ENCODE measurements at regions of chr20 and their contacts with region 1.

Region 1: GRCh38 chr20:20593447-20594170 is 118.8 kb downstream of the RALGAPA2 start:
- DNase-seq: peak; percentile 36
- H3K4me3 ChIP-seq: no peak overlapping the region
- H3K27ac ChIP-seq: no peak overlapping the region
- H3K27me3 ChIP-seq: no peaks in the 10 kb centered on the region
- CTCF ChIP-seq: peak; percentile 71

Region 2: DNA sequence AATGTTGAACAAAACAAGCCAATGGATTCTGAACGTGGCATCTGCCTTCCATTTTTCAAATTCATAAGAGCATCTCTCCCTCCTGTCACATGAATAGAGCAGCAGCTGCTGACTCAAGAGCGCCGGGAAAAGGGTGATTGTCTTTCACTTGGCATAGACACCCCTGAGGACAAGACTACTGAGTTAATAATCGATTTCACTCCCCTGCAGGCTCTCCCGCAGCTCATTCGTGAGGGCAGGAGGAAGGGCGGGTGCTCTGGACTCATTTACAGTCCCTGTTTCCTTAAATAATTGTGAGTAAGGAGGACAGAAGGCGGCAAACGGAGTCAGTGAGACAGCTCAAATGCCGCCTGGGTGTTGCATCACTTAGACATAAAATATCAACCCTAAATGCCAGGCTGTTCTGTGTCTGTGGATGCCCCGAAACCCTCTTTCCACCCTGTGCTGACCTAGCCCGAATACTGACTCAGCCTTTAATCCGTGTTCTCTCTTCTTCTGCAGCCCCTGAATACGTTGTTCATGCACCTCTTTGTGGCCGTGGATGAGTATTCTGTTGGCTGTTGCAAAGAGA is 519.7 kb before region 1 on chr20:
- CTCF ChIA-PET with region 1: interaction called, 10 read pairs
- POLR2A ChIA-PET with region 1: no interaction called
- DNase-seq: no peak
- H3K4me3 ChIP-seq: no peak overlapping the region
- H3K27ac ChIP-seq: no peak overlapping the region
- H3K27me3 ChIP-seq: peaks cover 29% of the 10 kb centered on the region
- CTCF ChIP-seq: no peak

Region 3: GRCh38 chr20:20360464-20360863 is 233.1 kb before region 1 on chr20:
- CTCF ChIA-PET with region 1: interaction called, 22 read pairs
- POLR2A ChIA-PET with region 1: no interaction called
- DNase-seq: peak; percentile 43
- H3K4me3 ChIP-seq: no peak overlapping the region
- H3K27ac ChIP-seq: no peak overlapping the region
- H3K27me3 ChIP-seq: peaks cover 46% of the 10 kb centered on the region
- CTCF ChIP-seq: peak; percentile 93

Region 4: DNA sequence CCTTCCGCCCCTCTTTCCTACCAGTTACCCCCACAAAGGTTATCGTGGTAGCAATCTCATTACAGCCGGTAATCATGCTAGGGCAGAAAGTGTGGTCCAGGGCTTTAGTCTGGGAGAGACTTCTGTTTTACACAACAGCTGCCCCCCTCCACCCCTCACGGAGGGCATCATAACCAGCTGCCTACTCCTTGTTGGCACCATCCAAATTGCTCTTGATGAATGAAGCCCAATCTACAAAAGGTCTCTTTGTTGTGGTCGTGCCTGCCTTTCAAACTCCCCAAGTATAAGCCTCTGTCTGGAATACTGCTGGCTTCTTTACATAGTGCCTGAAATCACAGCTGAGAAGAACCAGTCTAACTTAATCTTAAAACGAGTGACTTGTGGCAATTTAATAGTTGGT is 67.9 kb before region 1 on chr20:
- CTCF ChIA-PET with region 1: no interaction called
- POLR2A ChIA-PET with region 1: no interaction called
- DNase-seq: no peak
- H3K4me3 ChIP-seq: no peak overlapping the region
- H3K27ac ChIP-seq: no peak overlapping the region
- H3K27me3 ChIP-seq: no peaks in the 10 kb centered on the region
- CTCF ChIP-seq: no peak

Region 5: DNA sequence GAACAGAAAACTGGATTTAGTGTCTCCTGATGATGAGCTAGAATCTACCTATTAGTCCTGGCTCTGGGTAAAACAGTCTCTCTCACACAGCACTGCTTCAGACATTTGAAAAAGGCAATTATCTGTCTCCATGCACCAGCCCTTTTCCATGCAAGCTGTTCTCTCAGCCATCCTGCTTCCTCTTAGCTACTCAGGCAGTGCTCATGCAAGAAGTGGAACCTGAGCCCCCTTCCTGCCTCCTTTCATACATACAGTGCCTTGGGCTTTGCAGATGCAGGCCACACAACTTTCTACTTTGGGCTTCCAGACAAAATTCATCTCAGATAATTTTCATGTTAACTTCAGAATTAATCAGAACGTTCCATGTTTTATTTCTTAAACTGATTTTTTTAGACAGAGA is 32.4 kb before region 1 on chr20:
- CTCF ChIA-PET with region 1: interaction called, 27 read pairs
- POLR2A ChIA-PET with region 1: no interaction called
- DNase-seq: no peak
- H3K4me3 ChIP-seq: no peak overlapping the region
- H3K27ac ChIP-seq: no peak overlapping the region
- H3K27me3 ChIP-seq: no peaks in the 10 kb centered on the region
- CTCF ChIP-seq: no peak

Region 6: GRCh38 chr20:20582734-20583133 is 10.9 kb before region 1 on chr20:
- CTCF ChIA-PET with region 1: interaction called, 68 read pairs
- POLR2A ChIA-PET with region 1: no interaction called
- DNase-seq: no peak
- H3K4me3 ChIP-seq: no peak overlapping the region
- H3K27ac ChIP-seq: no peak overlapping the region
- H3K27me3 ChIP-seq: no peaks in the 10 kb centered on the region
- CTCF ChIP-seq: no peak